ENCODE measurements at regions of chr4 and their contacts with region 1.

Region 1: DNA sequence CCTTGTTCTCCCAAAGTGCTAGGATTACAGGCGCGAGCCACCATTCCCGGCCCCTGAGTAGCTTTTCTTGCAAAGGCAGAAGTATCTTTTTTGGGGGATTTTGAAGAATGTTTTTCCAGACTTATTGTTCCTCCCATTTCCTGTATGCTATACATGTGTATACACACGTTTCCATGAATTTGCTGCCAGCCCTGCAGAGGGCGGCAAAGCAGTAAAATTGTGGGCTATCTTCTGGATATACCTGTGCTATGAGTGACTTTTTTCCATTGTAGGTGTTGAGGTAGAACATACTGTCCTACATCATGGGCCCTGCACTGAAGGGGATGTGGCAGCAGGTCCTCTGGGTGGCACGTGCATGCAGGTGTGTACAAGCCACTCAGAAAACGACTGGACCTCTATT is 16.9 kb upstream of the MED28 start:
- DNase-seq: no peak
- H3K4me3 ChIP-seq: no peak overlapping the region
- CTCF ChIP-seq: peak; percentile 8

Region 2: GRCh38 chr4:17552427-17552826 is 45.1 kb before region 1 on chr4:
- CTCF ChIA-PET with region 1: interaction called, 15 read pairs
- POLR2A ChIA-PET with region 1: no interaction called
- DNase-seq: no peak
- H3K4me3 ChIP-seq: no peak overlapping the region
- CTCF ChIP-seq: no peak

Region 3: GRCh38 chr4:18250564-18250963 is 653.0 kb after region 1 on chr4:
- CTCF ChIA-PET with region 1: no interaction called
- POLR2A ChIA-PET with region 1: no interaction called
- DNase-seq: no peak
- H3K4me3 ChIP-seq: no peak overlapping the region
- CTCF ChIP-seq: no peak

Measured in AG04449 (cell line).